K562 (cell line): ENCODE measurements at regions of chr6 and their contacts with region 1.

Region 1: DNA sequence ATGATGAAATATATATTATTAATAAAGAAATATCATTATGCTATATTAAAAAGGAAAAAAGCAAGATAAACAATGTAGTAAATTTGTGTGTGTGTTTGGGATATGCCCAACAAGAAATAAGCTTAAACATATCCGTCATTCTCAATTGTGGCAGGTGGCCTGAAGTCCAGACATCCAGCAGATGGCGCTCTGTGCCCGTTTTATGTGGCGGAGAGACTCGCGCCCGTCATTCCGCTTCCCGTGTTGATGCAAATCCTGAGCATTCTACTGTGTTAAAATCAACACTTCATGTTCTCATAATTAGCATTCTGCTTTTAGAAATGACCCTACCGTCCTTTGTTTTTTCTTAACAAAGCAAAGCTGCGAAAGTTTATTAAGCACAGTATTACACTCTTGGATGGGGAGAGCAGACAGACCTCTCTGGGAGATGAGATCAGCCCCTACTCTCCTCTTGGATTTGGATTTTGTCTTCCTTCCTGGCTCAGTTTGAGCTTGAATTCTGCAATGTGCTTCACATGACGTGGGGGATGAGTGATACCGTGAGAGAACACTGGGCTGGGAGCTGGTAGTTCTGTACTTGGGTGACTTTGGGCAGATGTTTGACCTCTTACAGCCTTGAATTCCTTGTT is 125.8 kb downstream of the MCHR2 start:
- DNase-seq: peak; percentile 47 to 79 (median 58)
- ATAC-seq: peak; percentile 96
- H3K4me3 ChIP-seq: no peak overlapping the region
- H3K27ac ChIP-seq: no peak overlapping the region
- H3K4me1 ChIP-seq: no peaks in the 10 kb centered on the region
- H3K27me3 ChIP-seq: no peaks in the 10 kb centered on the region
- CTCF ChIP-seq: peak; percentile 73 to 88 (median 87)
- EP300 ChIP-seq: no peak
- POLR2A ChIP-seq: no peak
- RAD21 ChIP-seq: peak; percentile 73 to 82

Region 2: GRCh38 chr6:99905209-99906106 is 37.3 kb after region 1 on chr6:
- CTCF ChIA-PET with region 1: no interaction called
- POLR2A ChIA-PET with region 1: no interaction called
- in situ Hi-C with region 1: no loop called
- intact Hi-C with region 1: loop called (anchors 2 kb)
- DNase-seq: peak; percentile 31 to 41 (median 32)
- ATAC-seq: peak; percentile 83
- H3K4me3 ChIP-seq: no peak overlapping the region
- H3K27ac ChIP-seq: no peak overlapping the region
- H3K4me1 ChIP-seq: no peaks in the 10 kb centered on the region
- H3K27me3 ChIP-seq: no peaks in the 10 kb centered on the region
- CTCF ChIP-seq: peak; percentile 65 to 95 (median 84)
- EP300 ChIP-seq: no peak
- POLR2A ChIP-seq: no peak
- RAD21 ChIP-seq: peak in 1 of 2 experiments; percentile 46; a peak in 2 of 4 replicates

Region 3: DNA sequence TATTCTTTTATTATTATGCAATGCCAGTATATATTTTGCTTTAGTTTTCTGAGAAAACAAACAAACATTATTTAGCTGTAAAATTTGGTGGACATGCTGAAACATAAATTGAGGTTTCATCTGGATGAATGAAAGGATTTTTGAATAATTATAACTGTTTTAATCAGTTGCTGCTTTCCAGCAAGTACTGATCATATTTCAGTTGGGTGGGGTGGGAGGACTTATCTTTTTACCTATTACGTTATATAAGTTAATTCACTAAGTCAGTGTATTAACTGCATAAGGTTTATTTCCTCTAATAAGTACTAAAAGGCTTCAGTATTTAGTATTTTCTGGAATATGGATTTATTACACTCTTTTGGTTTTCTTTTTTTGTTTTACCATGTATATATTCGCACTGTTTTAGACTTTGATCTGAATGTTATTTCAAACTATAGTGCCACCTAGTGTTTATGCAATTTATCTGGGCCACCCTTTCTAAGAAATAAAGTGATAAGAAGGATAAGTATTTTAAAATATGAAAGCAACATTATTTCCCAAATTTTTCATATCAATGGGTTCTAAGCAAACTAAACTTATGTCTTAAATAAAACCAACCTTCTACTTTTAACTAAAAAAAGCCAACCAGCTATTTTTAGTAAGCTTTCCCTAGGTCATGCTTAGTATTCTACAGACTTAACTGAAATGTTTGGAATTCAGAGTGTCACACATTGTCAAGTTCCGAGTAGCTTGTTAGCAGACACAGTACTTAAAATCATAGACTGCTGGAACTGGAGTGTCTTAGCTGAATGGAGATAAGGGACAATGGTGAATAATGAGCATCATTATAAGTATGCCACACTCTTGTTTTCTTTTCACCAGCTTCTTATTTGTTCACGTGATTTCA is 231.2 kb after region 1 on chr6:
- CTCF ChIA-PET with region 1: interaction called, 13 read pairs
- POLR2A ChIA-PET with region 1: no interaction called
- in situ Hi-C with region 1: loop called (anchors 25 kb)
- intact Hi-C with region 1: loop called (anchors 1 kb)
- DNase-seq: peak in 1 of 4 experiments; percentile 24
- ATAC-seq: peak; percentile 69; the same call in 2 of the 3 replicates
- H3K4me3 ChIP-seq: no peak overlapping the region
- H3K27ac ChIP-seq: no peak overlapping the region
- H3K4me1 ChIP-seq: no peaks in the 10 kb centered on the region
- H3K27me3 ChIP-seq: no peaks in the 10 kb centered on the region
- CTCF ChIP-seq: peak in 2 of 3 experiments; percentile 45 to 69; a peak in 3 of 6 replicates
- EP300 ChIP-seq: no peak
- POLR2A ChIP-seq: no peak
- RAD21 ChIP-seq: peak; percentile 47 to 66; a peak in 3 of 4 replicates

Region 4: DNA sequence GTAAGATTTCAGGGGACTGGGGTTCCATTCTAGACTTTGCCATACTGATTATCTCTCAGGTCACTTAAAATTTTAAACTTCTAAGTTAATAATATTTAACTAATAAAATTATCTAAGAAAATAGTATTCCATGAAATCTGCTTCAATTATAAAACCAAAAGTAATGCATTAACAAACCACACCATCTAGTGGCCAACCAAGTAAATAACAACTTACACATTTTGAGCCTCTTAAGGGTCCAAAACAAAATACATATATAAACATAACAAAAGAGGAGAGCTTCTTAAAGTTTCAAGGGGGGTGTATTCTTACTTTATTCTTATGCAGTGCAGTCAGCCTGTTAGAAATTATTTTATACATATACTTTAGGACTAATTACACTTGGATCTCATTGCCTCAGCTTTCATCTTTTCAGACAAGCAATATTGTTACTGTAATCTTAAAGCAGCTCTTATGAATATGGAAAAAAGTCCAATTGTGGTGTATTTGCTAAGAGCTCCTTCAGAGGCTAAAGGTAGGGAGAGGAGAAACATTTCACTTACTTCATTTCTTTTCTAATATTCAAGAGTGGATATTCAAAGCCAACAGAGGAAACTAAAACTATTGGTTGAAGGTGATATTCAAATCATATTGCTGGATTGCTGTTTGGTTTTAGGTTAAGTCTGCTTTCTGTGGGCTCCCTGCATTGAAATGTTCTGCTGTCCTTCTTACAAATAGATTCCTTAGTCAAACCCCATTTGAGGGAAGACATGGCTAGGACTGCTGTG is 796.3 kb after region 1 on chr6:
- CTCF ChIA-PET with region 1: interaction called, 4 read pairs
- POLR2A ChIA-PET with region 1: no interaction called
- in situ Hi-C with region 1: no loop called
- intact Hi-C with region 1: loop called (anchors 5 kb)
- DNase-seq: peak; percentile 8 to 31 (median 20)
- ATAC-seq: peak; percentile 62
- H3K4me3 ChIP-seq: no peak overlapping the region
- H3K27ac ChIP-seq: no peak overlapping the region
- H3K4me1 ChIP-seq: no peaks in the 10 kb centered on the region
- H3K27me3 ChIP-seq: no peaks in the 10 kb centered on the region
- CTCF ChIP-seq: peak in 2 of 3 experiments; percentile 29 to 65; a peak in 3 of 6 replicates
- EP300 ChIP-seq: no peak
- POLR2A ChIP-seq: no peak
- RAD21 ChIP-seq: peak; percentile 41 to 50